Caco-2 (cell line): ENCODE measurements at regions of chr1 and their contacts with region 1.

Region 1: GRCh38 chr1:233304489-233305102 is 9.1 kb upstream of the PCNX2 start:
- DNase-seq: peak in 1 of 2 experiments; percentile 18
- H3K4me3 ChIP-seq: no peak overlapping the region
- H3K4me3 Mint-ChIP-seq: no peak overlapping the region
- H3K27ac Mint-ChIP-seq: no peak overlapping the region
- H3K4me1 ChIP-seq: no peaks in the 10 kb centered on the region
- H3K4me1 Mint-ChIP-seq: no peaks in the 10 kb centered on the region
- H3K27me3 ChIP-seq: no peaks in the 10 kb centered on the region; the same call in 1 of the 2 replicates
- H3K27me3 Mint-ChIP-seq: no peaks in the 10 kb centered on the region
- CTCF ChIP-seq: peak; percentile 71 to 75

Region 2: GRCh38 chr1:233224311-233224710 is 80.3 kb before region 1 on chr1:
- CTCF ChIA-PET with region 1: no interaction called
- POLR2A ChIA-PET with region 1: no interaction called
- intact Hi-C with region 1: no loop called
- DNase-seq: no peak
- H3K4me3 ChIP-seq: no peak overlapping the region
- H3K4me3 Mint-ChIP-seq: no peak overlapping the region
- H3K27ac Mint-ChIP-seq: no peak overlapping the region
- H3K4me1 ChIP-seq: no peaks in the 10 kb centered on the region
- H3K4me1 Mint-ChIP-seq: no peaks in the 10 kb centered on the region
- H3K27me3 ChIP-seq: no peaks in the 10 kb centered on the region
- H3K27me3 Mint-ChIP-seq: no peaks in the 10 kb centered on the region
- CTCF ChIP-seq: no peak

Region 3: GRCh38 chr1:233326811-233327650 is 22.4 kb after region 1 on chr1:
- CTCF ChIA-PET with region 1: no interaction called
- POLR2A ChIA-PET with region 1: no interaction called
- intact Hi-C with region 1: loop called (anchors 1 kb)
- DNase-seq: peak; percentile 94 to 96
- H3K4me3 ChIP-seq: peak overlapping the region; percentile 86
- H3K4me3 Mint-ChIP-seq: peak overlapping the region; percentile 88
- H3K27ac Mint-ChIP-seq: no peak overlapping the region
- H3K4me1 ChIP-seq: peaks cover 10% of the 10 kb centered on the region
- H3K4me1 Mint-ChIP-seq: peaks cover 4% of the 10 kb centered on the region
- H3K27me3 ChIP-seq: 0 out of 2 replicates have a peak, but pooled peaks cover 2% of the 10 kb centered on the region
- H3K27me3 Mint-ChIP-seq: peaks cover 2% of the 10 kb centered on the region
- CTCF ChIP-seq: no peak

Region 4: GRCh38 chr1:233424779-233425178 is 120.2 kb after region 1 on chr1:
- CTCF ChIA-PET with region 1: no interaction called
- POLR2A ChIA-PET with region 1: no interaction called
- intact Hi-C with region 1: loop called (anchors 10 kb)
- DNase-seq: no peak
- H3K4me3 ChIP-seq: no peak overlapping the region
- H3K4me3 Mint-ChIP-seq: no peak overlapping the region
- H3K27ac Mint-ChIP-seq: no peak overlapping the region
- H3K4me1 ChIP-seq: 0 out of 2 replicates have a peak, but pooled peaks cover 3% of the 10 kb centered on the region
- H3K4me1 Mint-ChIP-seq: no peaks in the 10 kb centered on the region
- H3K27me3 ChIP-seq: no peaks in the 10 kb centered on the region
- H3K27me3 Mint-ChIP-seq: peaks cover 22% of the 10 kb centered on the region
- CTCF ChIP-seq: peak; percentile 12 to 21

Region 5: GRCh38 chr1:233512538-233512937 is 207.9 kb after region 1 on chr1:
- CTCF ChIA-PET with region 1: no interaction called
- POLR2A ChIA-PET with region 1: no interaction called
- intact Hi-C with region 1: no loop called
- DNase-seq: no peak
- H3K4me3 ChIP-seq: no peak overlapping the region
- H3K4me3 Mint-ChIP-seq: no peak overlapping the region
- H3K27ac Mint-ChIP-seq: no peak overlapping the region
- H3K4me1 ChIP-seq: no peaks in the 10 kb centered on the region
- H3K4me1 Mint-ChIP-seq: no peaks in the 10 kb centered on the region
- H3K27me3 ChIP-seq: no peaks in the 10 kb centered on the region; the same call in none of the 2 replicates
- H3K27me3 Mint-ChIP-seq: no peaks in the 10 kb centered on the region
- CTCF ChIP-seq: no peak

Region 6: DNA sequence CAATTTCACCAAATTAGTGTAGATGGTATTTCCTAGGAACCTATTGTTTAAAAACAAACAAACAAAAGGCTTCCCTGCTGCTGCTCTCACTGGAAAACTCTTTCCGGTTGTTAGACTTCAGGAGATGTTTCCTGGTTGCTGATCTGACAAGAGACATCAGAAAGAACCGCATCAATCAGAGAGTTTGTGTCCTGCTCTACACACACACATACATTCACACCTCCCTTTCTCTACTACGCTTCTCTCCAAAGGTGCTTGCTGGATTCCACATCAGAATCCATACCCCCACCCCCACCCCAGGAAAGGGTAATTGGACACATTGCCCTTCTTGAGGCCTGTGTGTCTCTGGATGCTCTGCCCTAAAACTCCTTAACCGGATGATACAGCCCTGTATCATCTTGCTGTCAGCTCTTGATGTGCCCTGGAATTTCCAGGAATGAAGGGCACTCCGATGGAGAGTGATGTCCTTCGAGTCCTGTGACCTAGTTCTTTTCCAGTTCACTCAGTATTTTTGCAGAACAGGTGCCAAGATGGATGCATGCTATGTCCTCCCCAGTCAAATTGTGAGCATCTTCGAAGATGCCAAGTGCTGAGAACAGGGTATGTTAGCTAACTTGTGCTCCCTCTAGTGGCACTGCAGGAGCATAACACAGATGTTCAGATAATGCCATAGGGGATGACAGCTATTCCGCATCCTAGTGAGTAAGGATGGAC is 486.2 kb after region 1 on chr1:
- CTCF ChIA-PET with region 1: no interaction called
- POLR2A ChIA-PET with region 1: no interaction called
- intact Hi-C with region 1: loop called (anchors 1 kb)
- DNase-seq: peak in 1 of 2 experiments; percentile 43
- H3K4me3 ChIP-seq: no peak overlapping the region
- H3K4me3 Mint-ChIP-seq: no peak overlapping the region
- H3K27ac Mint-ChIP-seq: no peak overlapping the region
- H3K4me1 ChIP-seq: no peaks in the 10 kb centered on the region
- H3K4me1 Mint-ChIP-seq: no peaks in the 10 kb centered on the region
- H3K27me3 ChIP-seq: no peaks in the 10 kb centered on the region
- H3K27me3 Mint-ChIP-seq: no peaks in the 10 kb centered on the region
- CTCF ChIP-seq: peak; percentile 67 to 96

Region 7: GRCh38 chr1:234065794-234066447 is 761.3 kb after region 1 on chr1:
- CTCF ChIA-PET with region 1: interaction called, 3 read pairs
- POLR2A ChIA-PET with region 1: no interaction called
- intact Hi-C with region 1: loop called (anchors 1 kb)
- DNase-seq: peak; percentile 71 to 79
- H3K4me3 ChIP-seq: no peak overlapping the region
- H3K4me3 Mint-ChIP-seq: no peak overlapping the region
- H3K27ac Mint-ChIP-seq: no peak overlapping the region
- H3K4me1 ChIP-seq: no peaks in the 10 kb centered on the region
- H3K4me1 Mint-ChIP-seq: no peaks in the 10 kb centered on the region
- H3K27me3 ChIP-seq: no peaks in the 10 kb centered on the region
- H3K27me3 Mint-ChIP-seq: peaks cover 2% of the 10 kb centered on the region
- CTCF ChIP-seq: peak; percentile 82 to 91